ENCODE measurements at regions of chr1 and their contacts with region 1.

Region 1: GRCh38 chr1:192808518-192809306 is at the start of gene RGS2:
- DNase-seq: peak; percentile 98
- H3K4me3 ChIP-seq: peak within 1 kb of the TSS; percentile 60 to 82 (median 78)
- H3K27ac ChIP-seq: peak within 1 kb of the TSS; percentile 94 to 98 (median 96)
- H3K4me1 ChIP-seq: peaks cover 0 to 24% (median 11%) of the 10 kb centered on the region in 4 donors
- H3K27me3 ChIP-seq: no peaks in the 10 kb centered on the region
- CTCF ChIP-seq: no peak
- EP300 ChIP-seq: peak in 3 of 4 donors; percentile 54 to 78 (median 57)
- POLR2A ChIP-seq: peak; percentile 99
- total RNA-seq, gene RGS2: 366 to 667 (median 434) TPM

Region 2: GRCh38 chr1:192477630-192478029 is 331.1 kb before region 1 on chr1:
- intact Hi-C with region 1: loop called (anchors 5 kb)
- DNase-seq: no peak
- H3K4me3 ChIP-seq: no peak overlapping the region
- H3K27ac ChIP-seq: peak overlapping the region in 3 of 4 donors; percentile 57 to 67 (median 62)
- H3K4me1 ChIP-seq: peaks cover 0 to 38% (median 21%) of the 10 kb centered on the region in 4 donors
- H3K27me3 ChIP-seq: no peaks in the 10 kb centered on the region
- CTCF ChIP-seq: peak; percentile 37 to 53 (median 52)
- EP300 ChIP-seq: no peak
- POLR2A ChIP-seq: no peak

Region 3: GRCh38 chr1:192639607-192640368 is 168.9 kb before region 1 on chr1:
- intact Hi-C with region 1: no loop called
- DNase-seq: no peak
- H3K4me3 ChIP-seq: no peak overlapping the region
- H3K27ac ChIP-seq: no peak overlapping the region
- H3K4me1 ChIP-seq: no peaks in the 10 kb centered on the region
- H3K27me3 ChIP-seq: no peaks in the 10 kb centered on the region
- CTCF ChIP-seq: no peak
- EP300 ChIP-seq: no peak
- POLR2A ChIP-seq: no peak

Region 4: DNA sequence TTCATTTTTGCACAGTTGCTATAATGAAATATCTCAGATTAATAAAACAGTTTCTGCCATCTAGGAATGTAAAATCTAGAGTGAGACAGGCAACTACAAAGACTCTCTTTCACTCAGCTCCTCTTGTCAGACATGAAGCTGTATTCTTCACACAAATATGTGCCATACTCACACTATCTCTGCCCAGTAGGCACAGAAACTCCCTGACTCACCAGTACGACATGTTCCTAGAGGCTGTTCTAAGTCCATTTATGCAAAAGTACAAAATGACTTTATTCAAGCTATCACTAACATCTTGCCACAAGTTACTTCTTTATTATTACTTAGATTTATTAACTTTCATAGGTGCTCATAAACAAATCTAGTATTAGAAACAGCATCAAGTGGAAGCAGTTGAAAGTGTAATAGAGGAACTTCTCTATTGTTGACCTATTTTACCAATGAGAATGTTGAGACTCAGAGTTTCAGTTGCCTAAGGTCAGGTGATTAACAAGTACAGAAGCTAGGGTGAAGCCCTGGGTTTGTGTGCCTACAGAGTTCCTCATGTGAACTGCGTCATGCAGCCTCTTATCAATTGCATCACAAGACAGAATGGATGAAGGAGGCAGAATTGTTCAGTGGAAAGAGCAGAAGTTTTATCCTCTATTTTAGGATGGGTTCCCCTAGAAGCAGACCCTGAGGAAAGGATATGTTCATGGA is 99.0 kb after region 1 on chr1:
- intact Hi-C with region 1: loop called (anchors 5 kb)
- DNase-seq: no peak
- H3K4me3 ChIP-seq: no peak overlapping the region
- H3K27ac ChIP-seq: peak overlapping the region; percentile 71 to 84 (median 82)
- H3K4me1 ChIP-seq: peaks cover 0 to 68% (median 46%) of the 10 kb centered on the region in 4 donors
- H3K27me3 ChIP-seq: no peaks in the 10 kb centered on the region
- CTCF ChIP-seq: no peak
- EP300 ChIP-seq: peak; percentile 93 to 99 (median 98)
- POLR2A ChIP-seq: no peak

Region 5: DNA sequence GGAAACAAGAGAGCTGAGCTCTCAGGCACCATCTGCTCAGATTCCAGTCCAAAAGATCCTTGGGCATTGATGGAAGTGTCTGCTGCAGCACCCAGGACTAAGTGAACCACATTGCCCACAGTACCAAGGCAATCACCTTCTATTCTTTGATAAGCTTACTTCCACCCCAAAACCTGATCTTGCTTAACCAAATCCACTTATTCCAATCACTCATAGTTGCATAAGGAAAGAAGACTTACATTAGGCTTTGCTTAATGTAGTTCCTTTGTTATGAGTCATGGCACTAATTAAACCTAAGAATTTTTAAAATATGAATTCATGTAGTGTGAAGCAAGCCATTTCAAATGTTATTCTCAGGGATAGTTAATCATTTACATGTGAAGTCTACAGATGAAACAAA is 166.0 kb after region 1 on chr1:
- intact Hi-C with region 1: loop called (anchors 5 kb)
- DNase-seq: no peak
- H3K4me3 ChIP-seq: no peak overlapping the region
- H3K27ac ChIP-seq: peak overlapping the region in 3 of 4 donors; percentile 34 to 65 (median 50)
- H3K4me1 ChIP-seq: peaks cover 0 to 25% (median 15%) of the 10 kb centered on the region in 4 donors
- H3K27me3 ChIP-seq: no peaks in the 10 kb centered on the region
- CTCF ChIP-seq: no peak
- EP300 ChIP-seq: no peak
- POLR2A ChIP-seq: no peak

Region 6: DNA sequence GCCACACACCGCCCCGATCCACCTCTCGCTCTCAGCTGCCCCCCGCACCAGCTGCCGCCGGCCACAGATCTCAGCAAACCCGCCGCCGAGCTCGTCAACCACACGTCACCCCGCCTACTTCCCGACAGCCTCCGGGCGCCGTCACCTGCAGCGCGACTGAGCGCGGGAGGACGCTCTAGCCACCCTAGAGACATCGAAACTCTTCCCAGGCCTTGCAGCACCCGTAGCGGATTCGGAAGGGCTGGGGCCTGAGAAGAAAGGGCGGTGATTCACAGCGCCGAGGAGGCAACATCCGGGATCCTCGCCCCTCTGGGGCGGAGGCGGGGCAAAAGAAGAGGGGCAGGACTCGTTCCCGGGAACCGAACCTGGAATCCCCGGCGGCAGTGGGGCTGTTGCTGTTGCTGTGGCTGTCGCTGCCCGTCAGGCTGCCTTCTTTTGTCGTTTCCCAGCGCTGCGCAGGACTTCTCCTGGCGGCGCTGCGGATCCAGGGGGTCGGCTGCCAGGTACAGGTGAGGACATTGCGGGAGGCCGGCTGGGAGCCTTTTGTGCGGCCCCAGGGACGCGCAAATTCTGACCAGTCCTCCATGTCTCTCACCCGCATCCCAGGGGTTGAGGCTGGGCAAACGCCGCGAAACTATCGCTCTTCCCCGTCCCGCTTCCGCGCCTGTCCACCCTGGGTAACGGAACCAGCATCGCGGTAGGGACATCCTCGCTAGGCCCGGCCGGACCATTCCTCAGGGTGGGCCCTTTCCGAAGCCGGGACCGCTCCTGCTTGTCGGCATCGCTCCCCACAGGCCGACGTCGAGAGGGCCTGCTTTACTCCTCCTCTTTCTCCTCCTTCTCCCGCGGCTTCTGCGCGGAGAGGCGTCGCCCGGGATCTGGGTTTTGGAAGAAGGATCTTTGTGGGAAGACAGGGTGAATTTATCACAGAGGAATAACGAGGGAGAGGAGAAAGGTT is 250.8 kb after region 1 on chr1 and contains the starts of genes RO60 and UCHL5:
- intact Hi-C with region 1: loop called (anchors 1 kb)
- DNase-seq: peak; percentile 99
- H3K4me3 ChIP-seq: peak within 1 kb of the TSS; percentile 77 to 97 (median 84)
- H3K27ac ChIP-seq: peak within 1 kb of the TSS; percentile 96 to 99 (median 99)
- H3K4me1 ChIP-seq: peaks cover 0 to 48% (median 36%) of the 10 kb centered on the region in 4 donors
- H3K27me3 ChIP-seq: no peaks in the 10 kb centered on the region
- CTCF ChIP-seq: no peak
- EP300 ChIP-seq: peak in 2 of 4 donors; percentile 55 to 80
- POLR2A ChIP-seq: peak; percentile 78
- total RNA-seq, gene RO60: 94.6 to 128 (median 111) TPM
- total RNA-seq, gene UCHL5: 24.6 to 47.6 (median 36.8) TPM

Region 7: DNA sequence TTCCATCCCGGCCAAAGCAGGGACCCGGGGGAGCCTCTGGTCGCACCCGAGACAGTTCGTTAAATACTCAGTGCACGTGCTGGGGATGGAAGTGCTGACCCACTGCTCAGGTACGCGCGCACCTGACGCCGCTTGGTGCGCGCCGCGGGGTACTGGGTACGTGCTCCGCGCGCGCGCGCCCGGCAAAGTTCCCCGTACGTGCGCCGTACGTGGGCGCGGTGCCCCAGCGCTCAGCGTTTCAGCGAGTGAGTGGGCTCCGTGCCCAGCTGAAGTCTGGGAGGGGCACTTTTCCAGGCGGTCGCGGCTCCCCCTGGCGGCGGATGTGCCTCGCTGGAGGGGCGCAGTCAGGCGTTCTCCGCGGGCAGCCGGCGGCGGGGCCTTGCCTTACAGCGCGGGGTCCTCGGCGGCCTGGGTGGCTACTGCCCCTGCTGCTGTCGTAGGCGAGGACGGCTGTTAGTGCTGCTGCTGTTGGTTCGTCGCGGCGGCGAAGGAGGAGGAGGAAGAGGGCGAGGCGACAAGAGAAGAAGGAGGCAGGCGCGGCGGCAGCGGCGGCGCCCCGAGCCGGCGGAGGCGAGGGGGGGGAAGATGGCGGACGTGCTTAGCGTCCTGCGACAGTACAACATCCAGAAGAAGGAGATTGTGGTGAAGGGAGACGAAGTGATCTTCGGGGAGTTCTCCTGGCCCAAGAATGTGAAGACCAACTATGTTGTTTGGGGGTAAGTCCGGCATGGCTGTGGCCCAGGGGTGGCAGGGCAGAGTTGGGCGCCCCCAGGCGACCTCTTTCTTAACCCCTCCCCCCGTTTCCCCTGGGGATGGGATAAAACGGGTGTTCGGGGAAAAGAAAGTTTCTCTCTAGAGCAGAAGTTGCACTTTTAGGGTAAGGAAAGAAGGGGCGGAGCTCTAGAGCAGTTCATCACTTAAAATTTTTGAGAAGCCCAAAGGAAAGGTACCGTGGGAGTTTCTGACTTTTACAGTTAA is 313.2 kb after region 1 on chr1 and contains the start of gene CDC73:
- intact Hi-C with region 1: loop called (anchors 5 kb)
- DNase-seq: peak; percentile 98
- H3K4me3 ChIP-seq: peak within 1 kb of the TSS; percentile 58 to 74 (median 68)
- H3K27ac ChIP-seq: peak within 1 kb of the TSS; percentile 87 to 98 (median 93)
- H3K4me1 ChIP-seq: peaks cover 0 to 42% (median 30%) of the 10 kb centered on the region in 4 donors
- H3K27me3 ChIP-seq: no peaks in the 10 kb centered on the region
- CTCF ChIP-seq: peak; percentile 82 to 99 (median 94)
- EP300 ChIP-seq: peak in 2 of 4 donors; percentile 47 to 49
- POLR2A ChIP-seq: peak; percentile 80
- total RNA-seq, gene CDC73: 45.7 to 72.4 (median 52.2) TPM